GM10248 (cell line): ENCODE measurements at regions of chr11 and their contacts with region 1.

Region 1: DNA sequence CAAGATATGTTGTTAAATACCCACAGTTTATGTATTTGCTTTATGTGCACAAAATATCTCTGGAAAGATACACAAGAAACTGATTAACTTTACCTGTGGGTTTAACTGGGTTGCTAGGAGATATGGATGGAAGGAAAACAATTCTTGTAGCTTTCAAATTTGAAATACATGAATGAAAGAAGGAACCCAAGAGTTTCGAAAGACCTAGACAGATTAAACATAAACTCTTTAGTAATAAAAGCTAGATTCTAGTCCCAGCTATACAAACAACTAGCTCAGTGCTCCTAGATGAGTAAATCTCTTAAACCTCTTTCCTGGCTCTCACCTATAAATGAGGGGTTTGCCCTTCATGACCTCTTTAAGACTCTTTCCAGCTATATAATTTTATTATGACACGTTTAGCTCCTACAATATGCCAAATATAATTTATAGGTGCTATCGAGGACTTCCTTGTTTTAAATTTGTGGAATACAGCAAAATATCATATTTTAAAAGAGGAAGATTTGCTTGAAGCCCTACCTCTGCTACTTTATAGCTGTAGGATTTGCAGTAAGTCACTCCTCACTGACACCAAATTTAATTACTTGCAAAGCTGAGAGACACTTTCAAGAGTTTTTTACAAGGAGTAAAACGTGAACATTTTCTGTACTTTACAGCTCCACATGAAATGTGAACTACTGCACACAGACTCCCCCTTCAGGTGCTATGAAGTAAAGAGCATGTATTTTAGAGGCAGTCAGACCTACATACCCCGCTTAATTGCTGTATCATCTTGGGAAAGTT is 50.7 kb downstream of the RRAS2 start:
- DNase-seq: no peak
- CTCF ChIP-seq: peak; percentile 72

Region 2: DNA sequence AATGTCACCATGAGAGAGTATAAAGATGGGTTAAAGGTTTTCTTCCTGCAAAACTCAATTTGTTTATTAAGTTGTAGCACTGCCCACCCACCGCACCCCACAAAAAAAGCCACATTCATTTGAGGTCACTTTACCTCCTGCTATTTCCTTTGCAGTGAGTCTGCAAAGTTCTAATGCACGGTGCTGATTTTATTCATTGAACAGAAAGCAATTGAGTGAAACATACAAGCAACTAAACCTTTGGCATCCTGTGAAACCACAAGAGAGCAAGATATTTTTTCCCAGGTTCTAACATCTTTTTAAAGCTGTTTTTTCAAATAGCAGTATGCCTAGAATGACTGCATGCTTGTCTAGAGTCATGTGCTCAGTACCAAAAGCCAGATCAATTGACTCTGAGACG is 11.7 kb after region 1 on chr11:
- CTCF ChIA-PET with region 1: interaction called, 49 read pairs
- POLR2A ChIA-PET with region 1: interaction called, 3 read pairs
- DNase-seq: peak; percentile 20
- CTCF ChIP-seq: no peak

Region 3: DNA sequence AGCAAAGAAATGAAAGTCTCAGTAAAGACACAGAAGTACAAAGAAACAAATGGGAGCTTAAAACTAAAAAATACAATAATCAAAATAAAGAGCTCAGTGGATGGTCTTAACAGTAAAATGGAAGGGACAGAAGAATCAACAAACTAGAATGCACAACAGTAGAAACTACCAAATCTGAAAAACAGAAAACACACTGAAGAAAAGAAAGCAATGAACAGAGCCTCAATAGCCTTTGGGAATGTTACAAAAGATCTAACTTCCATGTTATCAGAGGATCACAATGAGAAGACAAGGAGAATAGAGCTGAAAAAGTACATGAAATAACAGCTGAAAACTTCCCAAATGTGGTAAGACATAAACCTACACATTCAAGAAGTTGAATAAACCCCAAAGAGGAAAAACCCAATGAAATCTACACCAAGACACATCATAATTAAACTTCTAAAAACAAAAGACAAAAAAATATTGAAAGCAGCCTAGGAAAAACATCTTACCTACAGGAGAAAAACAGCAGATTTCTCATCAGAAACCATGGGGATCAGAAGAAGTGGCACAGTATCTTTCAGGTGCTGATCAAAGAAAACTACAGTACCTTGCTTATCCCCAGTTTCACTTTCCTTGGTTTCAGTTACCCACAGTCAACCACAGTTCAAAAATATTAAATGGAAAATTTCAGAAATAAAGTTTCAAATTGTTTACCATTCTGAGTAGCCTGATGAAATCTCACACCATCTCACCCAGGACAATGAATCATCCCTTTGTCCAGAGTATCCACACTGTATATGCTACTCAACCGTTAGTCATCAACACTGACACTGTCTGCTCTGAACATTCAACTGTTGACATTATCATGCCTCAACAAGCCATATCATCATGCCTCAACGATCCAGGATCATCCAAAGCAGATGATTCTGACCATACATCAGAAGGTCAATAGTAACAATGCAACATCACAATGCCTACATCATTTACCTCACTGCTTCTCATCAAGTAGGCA is 28.5 kb after region 1 on chr11:
- CTCF ChIA-PET with region 1: interaction called, 10 read pairs
- POLR2A ChIA-PET with region 1: no interaction called
- DNase-seq: no peak
- CTCF ChIP-seq: no peak

Region 4: DNA sequence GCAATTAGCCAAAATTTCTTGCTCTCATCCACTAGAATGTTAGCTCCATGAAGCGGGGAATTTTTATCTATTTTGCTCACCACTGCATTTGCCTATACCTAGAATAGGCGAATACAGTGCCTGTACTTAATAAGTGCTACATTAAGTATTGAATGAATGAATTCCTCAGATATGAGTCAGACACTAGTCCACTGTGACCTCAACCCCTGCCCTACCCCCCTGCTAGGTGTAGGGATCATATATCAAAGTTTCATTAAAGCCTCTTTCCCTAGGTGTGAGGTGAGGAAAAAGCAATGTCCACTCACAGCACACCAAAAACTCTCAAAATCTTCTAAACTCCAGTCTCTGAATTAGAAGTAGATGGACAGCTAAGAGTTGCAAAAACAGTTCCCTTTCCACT is 221.6 kb after region 1 on chr11:
- CTCF ChIA-PET with region 1: no interaction called
- POLR2A ChIA-PET with region 1: no interaction called
- DNase-seq: no peak
- CTCF ChIP-seq: no peak